Activated CD8-positive, alpha-beta T cell treated with anti-CD3 and anti-CD28 coated beads for 36 hours (primary cell): ENCODE measurements at regions of chr1 and their contacts with region 1.

Region 1: DNA sequence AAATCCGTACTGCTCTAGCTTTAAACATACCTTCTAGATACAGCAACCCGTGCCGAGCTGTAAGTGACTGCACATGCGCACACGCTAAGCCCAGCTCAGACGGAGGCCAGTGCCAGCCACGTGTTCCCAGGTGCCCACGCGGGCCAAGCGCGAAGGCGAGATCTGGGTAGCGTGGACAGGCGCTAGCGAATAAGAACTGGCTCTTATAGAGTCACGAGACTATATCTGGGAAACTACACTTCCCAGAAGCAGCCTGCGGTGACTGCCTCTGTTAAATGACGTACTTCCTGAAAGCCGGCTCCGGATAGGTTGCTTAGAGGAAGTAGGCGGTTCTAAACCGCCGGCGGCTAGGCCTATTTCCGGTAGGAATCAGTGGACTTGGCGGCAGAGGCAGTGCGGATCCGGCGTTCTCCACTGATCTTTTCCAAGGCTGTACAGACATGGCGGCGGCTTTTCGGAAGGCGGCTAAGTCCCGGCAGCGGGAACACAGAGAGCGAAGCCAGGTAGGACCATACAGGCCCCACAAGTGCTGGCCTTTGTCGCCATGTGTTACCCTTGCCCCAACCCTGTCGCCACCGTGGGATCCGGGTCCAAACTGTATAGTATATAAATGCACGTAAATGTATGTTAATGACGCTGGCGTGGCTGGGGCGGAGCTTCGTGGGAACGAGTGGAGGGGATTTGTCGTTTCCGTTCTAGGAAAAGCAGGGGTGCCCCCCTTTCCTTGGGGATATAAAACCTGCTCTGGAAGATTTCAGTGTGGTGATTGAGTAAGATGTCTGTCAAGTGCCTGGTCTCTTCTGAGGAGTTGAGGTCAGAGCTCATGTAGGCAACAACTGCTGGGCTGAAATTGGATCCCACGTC is at the start of gene UTP11:
- DNase-seq: peak; percentile 94
- ATAC-seq: peak; percentile 77
- H3K4me3 Mint-ChIP-seq: peak within 1 kb of the TSS; percentile 87
- H3K27ac Mint-ChIP-seq: peak within 1 kb of the TSS; percentile 94
- H3K4me1 Mint-ChIP-seq: peaks cover 63% of the 10 kb centered on the region
- H3K27me3 Mint-ChIP-seq: no peaks in the 10 kb centered on the region
- CTCF ChIP-seq: no peak
- total RNA-seq, gene UTP11: 58.1 to 60.6 TPM

Region 2: GRCh38 chr1:37474046-37474759 is 538.4 kb before region 1 on chr1 and contains the start of gene ZC3H12A:
- CTCF ChIA-PET with region 1: interaction called, 3 read pairs
- POLR2A ChIA-PET with region 1: interaction called, 3 read pairs
- intact Hi-C with region 1: loop called (anchors 5 kb)
- DNase-seq: peak; percentile 93
- ATAC-seq: peak; percentile 62
- H3K4me3 Mint-ChIP-seq: peak within 1 kb of the TSS; percentile 90
- H3K27ac Mint-ChIP-seq: peak within 1 kb of the TSS; percentile 99
- H3K4me1 Mint-ChIP-seq: peaks cover 37% of the 10 kb centered on the region
- H3K27me3 Mint-ChIP-seq: no peaks in the 10 kb centered on the region
- CTCF ChIP-seq: no peak
- total RNA-seq, gene ZC3H12A: 20.4 to 20.5 TPM

Region 3: GRCh38 chr1:37989361-37989930 is 23.1 kb before region 1 on chr1:
- CTCF ChIA-PET with region 1: interaction called, 99 read pairs
- POLR2A ChIA-PET with region 1: interaction called, 114 read pairs
- intact Hi-C with region 1: no loop called
- DNase-seq: peak; percentile 54
- ATAC-seq: peak; percentile 31
- H3K4me3 Mint-ChIP-seq: peak overlapping the region; percentile 92
- H3K27ac Mint-ChIP-seq: peak overlapping the region; percentile 94
- H3K4me1 Mint-ChIP-seq: peaks cover 19% of the 10 kb centered on the region
- H3K27me3 Mint-ChIP-seq: no peaks in the 10 kb centered on the region
- CTCF ChIP-seq: no peak

Region 4: GRCh38 chr1:37999430-38000232 is 13.0 kb before region 1 on chr1:
- CTCF ChIA-PET with region 1: interaction called, 99 read pairs
- POLR2A ChIA-PET with region 1: interaction called, 114 read pairs
- intact Hi-C with region 1: no loop called
- DNase-seq: peak; percentile 39
- ATAC-seq: peak; percentile 17
- H3K4me3 Mint-ChIP-seq: peak overlapping the region; percentile 60
- H3K27ac Mint-ChIP-seq: peak overlapping the region; percentile 92
- H3K4me1 Mint-ChIP-seq: peaks cover 67% of the 10 kb centered on the region
- H3K27me3 Mint-ChIP-seq: no peaks in the 10 kb centered on the region
- CTCF ChIP-seq: no peak

Region 5: GRCh38 chr1:38026592-38027200 is 14.1 kb after region 1 on chr1:
- CTCF ChIA-PET with region 1: interaction called, 23 read pairs
- POLR2A ChIA-PET with region 1: interaction called, 69 read pairs
- intact Hi-C with region 1: no loop called
- DNase-seq: peak; percentile 76
- ATAC-seq: no peak
- H3K4me3 Mint-ChIP-seq: no peak overlapping the region
- H3K27ac Mint-ChIP-seq: no peak overlapping the region
- H3K4me1 Mint-ChIP-seq: peaks cover 55% of the 10 kb centered on the region
- H3K27me3 Mint-ChIP-seq: no peaks in the 10 kb centered on the region
- CTCF ChIP-seq: peak; percentile 71